Keratinocyte (primary cell): ENCODE measurements at regions of chr10 and their contacts with region 1.

Region 1: DNA sequence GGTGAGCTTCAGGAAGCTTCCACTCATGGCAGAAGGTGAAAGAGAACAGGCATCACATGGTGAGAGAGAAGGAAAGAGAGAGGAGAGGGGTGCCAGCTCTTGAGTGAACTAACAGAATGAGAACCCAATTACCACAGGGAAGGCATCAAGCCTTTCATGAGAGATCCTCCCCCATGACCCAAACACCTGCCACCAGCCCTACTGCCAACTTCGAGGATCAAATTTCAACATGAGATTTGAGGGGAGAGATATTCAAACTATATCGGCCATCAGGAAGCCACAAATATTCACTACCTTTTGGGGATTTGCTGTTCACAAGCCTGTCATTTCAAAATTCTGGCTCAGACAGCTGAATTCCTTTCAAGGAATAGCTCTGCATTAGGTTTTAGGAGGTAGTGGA is 39.9 kb upstream of the SMNDC1 start:
- DNase-seq: no peak
- H3K4me3 ChIP-seq: no peak overlapping the region
- H3K27ac ChIP-seq: no peak overlapping the region
- H3K4me1 ChIP-seq: no peaks in the 10 kb centered on the region
- H3K27me3 ChIP-seq: no peaks in the 10 kb centered on the region
- CTCF ChIP-seq: no peak

Region 2: DNA sequence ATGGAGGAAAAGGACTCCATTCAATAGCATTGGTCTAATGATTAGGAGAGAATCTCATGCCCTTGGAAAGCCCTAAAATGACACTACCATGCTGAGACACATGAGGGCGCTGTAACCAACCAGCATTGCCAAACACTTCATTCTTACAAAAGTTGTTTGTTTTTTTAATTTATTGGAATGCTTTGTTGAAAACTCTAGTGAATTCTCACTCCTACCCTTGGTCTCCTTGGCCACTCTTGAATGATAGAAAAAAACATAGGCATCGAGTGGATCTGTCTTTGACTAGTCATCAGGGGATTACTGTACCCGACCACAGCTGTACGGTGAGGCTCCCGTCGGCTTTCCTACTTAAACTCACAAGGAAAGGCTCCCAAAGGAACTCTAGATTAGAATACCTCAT is 366.1 kb before region 1 on chr10:
- dilution Hi-C with region 1: no loop called
- DNase-seq: no peak
- H3K4me3 ChIP-seq: no peak overlapping the region
- H3K27ac ChIP-seq: no peak overlapping the region
- H3K4me1 ChIP-seq: no peaks in the 10 kb centered on the region
- H3K27me3 ChIP-seq: no peaks in the 10 kb centered on the region
- CTCF ChIP-seq: peak; percentile 69 to 83 (median 80)

Region 3: GRCh38 chr10:110414563-110415309 is 70.1 kb after region 1 on chr10:
- dilution Hi-C with region 1: loop called (anchors 5 kb)
- DNase-seq: peak; percentile 94
- H3K4me3 ChIP-seq: no peak overlapping the region
- H3K27ac ChIP-seq: peak overlapping the region; percentile 37
- H3K4me1 ChIP-seq: peaks cover 46% of the 10 kb centered on the region
- H3K27me3 ChIP-seq: no peaks in the 10 kb centered on the region
- CTCF ChIP-seq: no peak

Region 4: DNA sequence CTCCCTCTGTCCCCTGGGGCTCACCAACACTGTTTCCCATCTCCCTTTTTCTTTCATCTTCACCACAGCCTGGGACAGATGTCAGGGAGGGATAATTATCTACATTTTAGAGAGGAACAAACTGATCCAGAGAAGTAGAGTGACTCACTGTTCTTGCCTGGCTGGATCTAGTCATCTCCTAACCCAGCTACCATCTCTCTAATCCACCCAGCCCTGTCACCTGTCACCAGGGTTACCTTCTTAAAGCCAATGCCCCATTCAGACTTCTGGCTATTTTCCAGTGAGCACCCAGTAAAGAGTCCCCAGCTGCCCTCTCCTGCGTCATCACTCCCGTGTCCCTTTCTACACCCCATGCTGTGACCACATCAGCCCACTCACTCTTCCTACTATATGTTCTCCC is 84.7 kb after region 1 on chr10:
- dilution Hi-C with region 1: no loop called
- DNase-seq: no peak
- H3K4me3 ChIP-seq: no peak overlapping the region
- H3K27ac ChIP-seq: no peak overlapping the region
- H3K4me1 ChIP-seq: peaks cover 23% of the 10 kb centered on the region
- H3K27me3 ChIP-seq: no peaks in the 10 kb centered on the region
- CTCF ChIP-seq: no peak